Natural killer cell (primary cell): ENCODE measurements at regions of chr4 and their contacts with region 1.

Region 1: GRCh38 chr4:81494031-81494431 is 22.3 kb upstream of the RASGEF1B start:
- DNase-seq: peak in 1 of 2 donors; percentile 65
- ATAC-seq: peak; percentile 21 to 47 (median 42)
- H3K4me3 ChIP-seq: peak overlapping the region; percentile 29
- H3K4me3 Mint-ChIP-seq: peak overlapping the region; percentile 93
- H3K27ac ChIP-seq: peak overlapping the region; percentile 73
- H3K27ac Mint-ChIP-seq: peak overlapping the region; percentile 92
- H3K4me1 ChIP-seq: peaks cover 19% of the 10 kb centered on the region
- H3K4me1 Mint-ChIP-seq: peaks cover 47 to 55% of the 10 kb centered on the region in 2 donors
- H3K27me3 ChIP-seq: no peaks in the 10 kb centered on the region
- H3K27me3 Mint-ChIP-seq: no peaks in the 10 kb centered on the region
- CTCF ChIP-seq: no peak

Region 2: GRCh38 chr4:80831383-80832361 is 662.4 kb before region 1 on chr4:
- intact Hi-C with region 1: no loop called
- DNase-seq: no peak
- ATAC-seq: no peak
- H3K4me3 ChIP-seq: no peak overlapping the region
- H3K4me3 Mint-ChIP-seq: no peak overlapping the region
- H3K27ac ChIP-seq: no peak overlapping the region
- H3K27ac Mint-ChIP-seq: no peak overlapping the region
- H3K4me1 ChIP-seq: no peaks in the 10 kb centered on the region
- H3K4me1 Mint-ChIP-seq: no peaks in the 10 kb centered on the region
- H3K27me3 ChIP-seq: no peaks in the 10 kb centered on the region
- H3K27me3 Mint-ChIP-seq: no peaks in the 10 kb centered on the region
- CTCF ChIP-seq: no peak

Region 3: GRCh38 chr4:81465395-81466340 is 28.4 kb before region 1 on chr4:
- intact Hi-C with region 1: no loop called
- DNase-seq: no peak
- ATAC-seq: no peak
- H3K4me3 ChIP-seq: no peak overlapping the region
- H3K4me3 Mint-ChIP-seq: no peak overlapping the region
- H3K27ac ChIP-seq: no peak overlapping the region
- H3K27ac Mint-ChIP-seq: peak overlapping the region in 1 of 2 donors; percentile 21
- H3K4me1 ChIP-seq: peaks cover 8% of the 10 kb centered on the region
- H3K4me1 Mint-ChIP-seq: peaks cover 41% of the 10 kb centered on the region in 2 donors
- H3K27me3 ChIP-seq: no peaks in the 10 kb centered on the region
- H3K27me3 Mint-ChIP-seq: no peaks in the 10 kb centered on the region
- CTCF ChIP-seq: no peak

Region 4: DNA sequence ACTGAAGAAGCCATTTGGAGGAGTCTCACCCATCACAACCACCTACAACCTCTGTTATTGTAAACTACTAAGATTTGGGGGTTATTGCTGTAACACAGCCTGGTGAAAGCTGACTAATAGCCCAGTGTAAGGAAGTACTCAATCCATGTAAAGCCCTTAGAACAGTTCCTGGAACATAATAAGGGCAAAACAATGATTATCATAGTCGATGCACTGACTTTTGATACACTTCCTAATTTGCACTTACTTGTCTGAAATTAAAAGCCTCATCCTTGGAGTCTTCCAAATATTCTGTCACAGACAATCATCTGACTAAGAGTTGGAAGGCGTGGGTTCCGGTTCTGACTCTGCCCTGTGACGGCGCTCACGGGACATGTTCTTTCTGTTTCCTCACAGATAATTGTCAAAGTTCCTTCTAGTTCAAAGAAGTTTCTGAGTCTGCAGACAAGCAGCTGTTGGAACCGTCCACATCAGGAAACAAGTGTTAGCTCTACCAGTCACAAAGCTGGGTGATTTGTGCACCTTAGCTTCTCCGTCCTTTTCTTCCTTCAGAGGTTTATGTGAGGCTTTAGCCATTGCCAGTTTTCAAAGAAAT is 11.1 kb after region 1 on chr4:
- intact Hi-C with region 1: loop called (anchors 1 kb)
- DNase-seq: peak; percentile 55 to 80
- ATAC-seq: peak; percentile 64 to 82 (median 72)
- H3K4me3 ChIP-seq: no peak overlapping the region
- H3K4me3 Mint-ChIP-seq: peak overlapping the region; percentile 72
- H3K27ac ChIP-seq: peak overlapping the region; percentile 74
- H3K27ac Mint-ChIP-seq: peak overlapping the region; percentile 76 to 90
- H3K4me1 ChIP-seq: peaks cover 33% of the 10 kb centered on the region
- H3K4me1 Mint-ChIP-seq: peaks cover 41 to 43% of the 10 kb centered on the region in 2 donors
- H3K27me3 ChIP-seq: no peaks in the 10 kb centered on the region
- H3K27me3 Mint-ChIP-seq: no peaks in the 10 kb centered on the region
- CTCF ChIP-seq: no peak

Region 5: DNA sequence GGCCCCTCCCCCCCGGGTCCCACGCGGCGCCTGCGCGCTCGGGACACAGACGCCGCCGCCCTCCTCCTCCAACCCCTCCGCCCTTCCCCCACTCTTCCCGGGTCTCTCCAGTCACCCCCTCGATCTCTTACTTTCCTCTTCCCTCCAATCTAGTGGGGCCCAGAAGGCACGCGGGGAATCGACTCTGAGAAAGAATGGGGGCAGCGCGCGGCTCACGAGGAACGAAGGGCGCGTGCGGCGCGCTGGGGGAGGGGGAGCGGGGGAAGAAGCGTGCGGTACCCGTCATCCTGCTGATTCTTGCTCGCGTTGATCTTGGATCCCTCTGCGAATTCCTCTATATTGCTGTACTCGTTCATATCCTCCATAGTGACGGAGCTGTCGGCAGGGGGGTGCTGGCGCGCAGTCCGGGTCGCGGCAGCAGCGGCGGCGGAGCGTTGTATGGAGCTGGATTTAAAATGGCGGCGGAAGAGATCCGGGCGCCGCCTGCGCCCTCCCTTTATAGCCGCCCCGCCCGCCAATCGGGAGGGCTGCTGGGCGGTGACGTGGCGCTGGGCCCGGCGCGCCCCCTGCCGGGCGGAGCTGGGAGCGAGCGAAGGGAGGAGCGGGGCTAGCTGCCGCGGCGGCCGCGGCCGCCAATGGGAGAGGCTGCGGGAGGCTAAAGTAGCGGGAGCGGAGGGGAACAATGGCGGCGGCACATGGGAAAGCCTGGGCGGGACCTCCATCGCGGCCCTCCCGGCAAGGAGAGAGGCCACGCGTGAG is 935.1 kb after region 1 on chr4:
- intact Hi-C with region 1: loop called (anchors 10 kb)
- DNase-seq: peak; percentile 94 to 97
- ATAC-seq: peak; percentile 67 to 87 (median 70)
- H3K4me3 ChIP-seq: peak overlapping the region; percentile 100
- H3K4me3 Mint-ChIP-seq: peak overlapping the region; percentile 100
- H3K27ac ChIP-seq: peak overlapping the region; percentile 100
- H3K27ac Mint-ChIP-seq: peak overlapping the region; percentile 96
- H3K4me1 ChIP-seq: peaks cover 15% of the 10 kb centered on the region
- H3K4me1 Mint-ChIP-seq: peaks cover 46 to 60% of the 10 kb centered on the region in 2 donors
- H3K27me3 ChIP-seq: no peaks in the 10 kb centered on the region
- H3K27me3 Mint-ChIP-seq: no peaks in the 10 kb centered on the region
- CTCF ChIP-seq: peak; percentile 94